Panc1 (cell line): ENCODE measurements at regions of chr7 and their contacts with region 1.

Region 1: DNA sequence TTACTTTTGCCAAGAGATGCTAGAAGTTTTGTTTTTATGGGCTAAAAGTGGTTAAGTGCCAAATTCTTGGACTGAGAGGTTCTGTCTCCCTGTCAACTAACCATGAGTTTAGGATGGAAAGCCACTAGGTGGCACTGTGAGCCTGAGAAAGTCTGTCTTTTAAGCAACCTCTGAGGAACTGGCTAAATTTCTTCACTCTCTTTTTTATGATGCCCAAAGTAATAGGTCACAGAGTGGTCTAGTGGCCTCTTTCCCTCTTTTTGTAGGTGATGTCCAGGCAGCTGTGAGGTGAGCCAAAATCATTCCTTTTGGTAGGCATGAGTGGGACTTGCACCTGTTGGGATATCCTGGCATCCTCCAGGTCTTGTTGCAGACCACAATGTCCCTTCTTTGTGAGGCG is 56.8 kb downstream of the SND1 start:
- DNase-seq: peak; percentile 63
- ATAC-seq: peak; percentile 91
- H3K4me3 ChIP-seq: no peak overlapping the region
- H3K27ac ChIP-seq: no peak overlapping the region
- H3K4me1 ChIP-seq: peaks cover 4% of the 10 kb centered on the region
- H3K27me3 ChIP-seq: no peaks in the 10 kb centered on the region
- CTCF ChIP-seq: peak; percentile 75

Region 2: GRCh38 chr7:127114742-127115265 is 594.0 kb before region 1 on chr7:
- CTCF ChIA-PET with region 1: no interaction called
- POLR2A ChIA-PET with region 1: no interaction called
- in situ Hi-C with region 1: no loop called
- intact Hi-C with region 1: no loop called
- DNase-seq: no peak
- ATAC-seq: peak; percentile 51; the same call in 1 of the 2 replicates
- H3K4me3 ChIP-seq: no peak overlapping the region
- H3K27ac ChIP-seq: no peak overlapping the region
- H3K4me1 ChIP-seq: no peaks in the 10 kb centered on the region
- H3K27me3 ChIP-seq: no peaks in the 10 kb centered on the region
- CTCF ChIP-seq: no peak

Region 3: DNA sequence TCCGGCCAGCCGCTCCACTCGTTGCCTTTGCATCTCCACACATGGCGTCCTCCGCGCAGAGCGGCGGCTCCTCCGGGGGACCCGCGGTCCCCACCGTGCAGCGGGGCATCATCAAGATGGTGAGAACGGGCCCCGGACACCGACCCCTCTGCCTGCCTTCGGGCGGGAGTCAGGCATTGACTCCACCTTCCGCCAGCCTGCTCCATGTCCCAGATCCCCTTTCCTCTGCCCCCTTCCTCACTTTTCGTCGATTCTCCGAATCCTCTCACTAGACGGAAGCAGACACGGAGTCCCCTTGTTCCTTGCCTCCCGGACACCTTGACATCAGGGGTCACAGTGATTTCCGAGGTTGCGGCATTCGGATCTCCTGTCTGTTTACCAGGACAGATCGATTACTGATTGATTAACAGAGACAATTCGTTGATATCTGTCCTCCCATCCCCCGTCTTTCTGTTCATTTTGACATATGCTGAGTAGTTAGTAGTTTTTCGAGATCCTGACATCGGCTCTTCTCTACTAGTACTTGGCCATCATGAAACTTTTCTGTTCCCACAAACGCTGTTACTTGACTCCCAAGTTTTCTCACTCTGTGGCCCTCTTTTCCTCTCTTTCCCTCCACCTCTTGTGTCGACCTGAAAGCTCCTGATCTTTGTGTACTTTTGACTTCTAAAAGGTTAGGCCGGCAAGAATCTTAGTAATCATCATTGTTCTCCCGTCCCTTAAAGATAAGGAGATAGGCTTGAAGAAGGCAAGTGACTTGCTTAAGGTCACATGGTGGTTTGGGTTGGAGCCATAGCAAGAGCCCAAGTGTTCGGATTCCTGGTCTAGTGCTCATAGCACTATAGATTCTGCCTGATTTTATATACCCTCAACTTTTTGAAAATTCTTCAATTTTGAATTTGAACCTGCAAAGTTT is 56.2 kb before region 1 on chr7:
- CTCF ChIA-PET with region 1: interaction called, 10 read pairs
- POLR2A ChIA-PET with region 1: no interaction called
- in situ Hi-C with region 1: no loop called
- intact Hi-C with region 1: no loop called
- DNase-seq: no peak
- ATAC-seq: peak; percentile 35; the same call in 1 of the 2 replicates
- H3K4me3 ChIP-seq: peak overlapping the region; percentile 83 to 100
- H3K27ac ChIP-seq: peak overlapping the region; percentile 82
- H3K4me1 ChIP-seq: peaks cover 26% of the 10 kb centered on the region
- H3K27me3 ChIP-seq: no peaks in the 10 kb centered on the region
- CTCF ChIP-seq: no peak

Region 4: DNA sequence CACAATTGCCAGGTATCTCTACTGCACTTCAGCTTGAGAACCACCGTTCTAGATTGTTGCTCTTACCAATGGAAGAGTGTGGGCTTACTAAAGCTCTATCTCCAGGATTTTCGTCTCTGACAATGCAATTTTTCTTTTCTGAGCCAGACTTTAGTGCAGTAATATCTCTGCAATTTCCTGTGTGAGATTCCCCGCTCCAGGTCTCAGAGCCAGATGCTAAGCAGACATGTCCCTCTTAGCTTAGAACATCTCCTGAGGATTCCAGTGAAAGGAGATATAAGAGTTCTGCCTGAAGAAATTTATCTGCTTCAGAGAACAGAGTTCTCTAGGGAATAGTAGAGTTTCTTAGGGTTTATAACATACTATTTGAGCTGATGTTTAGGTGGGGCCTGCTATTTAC is 25.2 kb after region 1 on chr7:
- CTCF ChIA-PET with region 1: no interaction called
- POLR2A ChIA-PET with region 1: no interaction called
- in situ Hi-C with region 1: no loop called
- intact Hi-C with region 1: no loop called
- DNase-seq: no peak
- ATAC-seq: no peak
- H3K4me3 ChIP-seq: no peak overlapping the region
- H3K27ac ChIP-seq: no peak overlapping the region
- H3K4me1 ChIP-seq: no peaks in the 10 kb centered on the region
- H3K27me3 ChIP-seq: no peaks in the 10 kb centered on the region
- CTCF ChIP-seq: no peak

Region 5: GRCh38 chr7:128031901-128032604 is 323.3 kb after region 1 on chr7:
- CTCF ChIA-PET with region 1: no interaction called
- POLR2A ChIA-PET with region 1: no interaction called
- in situ Hi-C with region 1: no loop called
- intact Hi-C with region 1: no loop called
- DNase-seq: no peak
- ATAC-seq: no peak
- H3K4me3 ChIP-seq: peak overlapping the region in 1 of 2 experiments; percentile 18; a peak in 1 of 4 replicates
- H3K27ac ChIP-seq: no peak overlapping the region
- H3K4me1 ChIP-seq: no peaks in the 10 kb centered on the region
- H3K27me3 ChIP-seq: no peaks in the 10 kb centered on the region
- CTCF ChIP-seq: no peak